ENCODE measurements at regions of chr5 and their contacts with region 1.

Region 1: DNA sequence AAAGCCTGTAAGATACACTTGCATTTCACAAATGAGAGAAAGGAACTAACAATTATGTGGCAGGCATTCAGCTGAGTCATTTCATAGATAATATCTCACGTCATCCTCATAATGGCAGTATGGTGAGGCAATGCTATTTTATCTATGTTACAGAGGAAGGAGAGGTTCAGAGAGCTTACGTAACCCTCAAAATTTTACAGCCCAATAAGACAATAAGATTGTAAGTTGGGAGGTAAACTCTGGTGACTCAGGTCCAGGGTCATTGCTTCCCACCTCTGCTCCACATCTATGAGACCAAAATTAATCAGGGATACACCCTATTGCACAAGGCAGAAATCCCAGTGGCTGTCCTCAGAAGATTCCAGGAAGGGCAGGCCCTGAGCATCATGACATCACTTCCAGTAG is 309.7 kb downstream of the NSG2 start:
- DNase-seq: peak; percentile 97

Region 2: DNA sequence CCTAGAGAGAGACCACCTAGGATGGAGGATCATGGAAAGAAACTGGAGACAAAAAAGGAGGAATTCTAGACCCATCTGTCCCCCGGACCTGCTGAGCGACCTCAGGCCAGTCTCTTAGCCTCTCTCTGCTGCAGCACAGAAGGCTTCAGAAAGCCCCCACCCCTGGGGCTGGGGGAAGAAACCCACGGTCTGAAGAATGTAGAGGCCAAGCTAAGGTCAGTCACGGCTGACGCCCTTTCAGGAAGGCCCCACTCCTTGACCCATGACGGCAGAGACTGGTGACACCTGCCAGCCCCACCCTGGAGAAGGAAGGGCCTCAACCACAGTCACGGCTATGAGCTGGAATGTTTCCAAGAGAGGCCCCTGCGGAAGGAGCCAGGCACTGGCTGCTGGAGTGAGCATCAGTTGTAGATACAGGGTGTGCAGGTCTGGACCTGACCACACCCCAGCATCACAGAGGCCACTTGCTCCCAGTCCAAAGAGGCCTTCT is 618.2 kb before region 1 on chr5:
- in situ Hi-C with region 1: no loop called
- DNase-seq: peak; percentile 92

Region 3: GRCh38 chr5:173887610-173888472 is 467.4 kb before region 1 on chr5 and contains the start of gene CPEB4:
- in situ Hi-C with region 1: no loop called
- DNase-seq: peak; percentile 99
- total RNA-seq, gene CPEB4: 0.90 and 9.8 TPM in 2 replicates

Region 4: DNA sequence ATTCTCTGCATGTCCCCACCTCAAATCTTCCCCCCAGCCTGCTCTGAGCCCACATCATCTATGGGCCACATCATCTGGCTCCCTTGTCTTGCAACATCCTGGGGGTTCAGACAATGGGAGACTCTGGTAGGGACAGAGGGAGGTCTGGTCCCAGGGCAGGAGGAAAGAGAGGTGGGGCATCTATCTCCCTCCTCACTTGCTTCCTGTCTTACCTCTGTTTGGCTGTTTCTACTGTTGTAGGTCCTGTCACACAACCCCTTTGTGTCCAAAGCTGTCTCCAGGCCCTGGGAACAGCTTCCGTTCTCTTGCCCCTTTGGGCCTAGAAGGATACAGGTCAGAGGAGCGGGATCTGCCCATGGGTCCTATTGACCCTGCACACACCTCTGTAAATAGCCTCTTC is 82.5 kb before region 1 on chr5:
- in situ Hi-C with region 1: no loop called
- DNase-seq: no peak

Region 5: DNA sequence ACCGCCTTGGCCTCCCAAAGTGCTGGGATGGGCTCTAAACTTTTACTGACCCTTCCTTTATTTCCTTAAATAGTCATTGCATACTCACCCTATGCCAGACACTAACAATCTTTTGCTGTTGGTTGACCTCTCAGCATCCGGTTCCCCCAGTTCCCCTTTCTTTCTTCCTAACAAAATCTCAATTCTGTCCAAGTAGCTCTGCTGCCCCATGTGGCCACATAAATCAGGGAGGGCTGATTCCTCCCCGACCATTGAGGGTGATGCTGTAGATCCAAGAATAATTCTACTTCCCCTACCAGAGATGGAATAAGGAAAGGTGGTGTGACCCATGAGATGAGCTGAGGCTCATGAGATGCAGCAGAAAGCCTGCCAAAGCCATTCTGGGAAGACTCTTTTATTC is 53.9 kb after region 1 on chr5:
- in situ Hi-C with region 1: loop called (anchors 10 kb)
- DNase-seq: no peak

Region 6: GRCh38 chr5:174490728-174491127 is 135.5 kb after region 1 on chr5:
- in situ Hi-C with region 1: no loop called
- DNase-seq: no peak